ENCODE measurements at regions of chr2 and their contacts with region 1.

Region 1: DNA sequence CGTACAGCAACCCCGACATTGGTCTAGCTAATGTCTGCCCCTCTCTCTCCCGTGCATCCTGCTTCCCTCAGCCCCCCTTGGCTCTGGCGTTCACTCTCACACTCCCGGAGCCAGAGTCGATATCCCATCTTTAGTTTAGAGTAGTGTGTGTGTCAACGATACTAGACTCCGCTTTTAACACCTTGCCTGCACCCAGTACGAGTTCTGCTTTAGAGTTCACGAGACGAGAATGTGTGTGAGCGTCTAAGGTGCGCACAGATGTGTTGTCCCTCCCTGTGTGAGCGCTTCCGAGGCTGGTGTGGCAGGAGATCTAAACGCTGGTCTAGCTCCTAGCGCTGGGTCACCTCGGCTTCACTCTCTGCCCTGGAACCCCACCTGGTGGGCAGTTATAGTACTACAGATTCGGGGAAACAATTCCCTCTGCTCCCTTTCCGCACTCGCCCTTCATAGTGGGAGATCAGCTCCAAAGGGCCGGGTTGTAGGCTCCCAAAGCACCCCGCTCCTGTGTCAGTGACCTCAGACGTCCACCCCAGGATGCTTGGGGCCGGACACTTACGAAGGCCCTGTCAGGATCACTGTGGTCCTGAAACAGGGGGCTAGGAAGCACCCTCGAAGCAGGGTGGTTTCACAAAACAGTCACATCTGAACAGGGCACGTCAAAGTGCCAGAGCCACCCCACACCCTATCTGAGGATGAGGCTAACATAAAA is 2.6 kb upstream of the CYP26B1 start:
- DNase-seq: peak; percentile 83 to 92
- ATAC-seq: peak; percentile 66 to 83
- H3K4me3 ChIP-seq: peak overlapping the region; percentile 61
- H3K27ac ChIP-seq: peak overlapping the region; percentile 29 to 59; a peak in 4 of 6 replicates
- H3K4me1 ChIP-seq: peaks cover 36% of the 10 kb centered on the region
- CTCF ChIP-seq: peak; percentile 89
- EP300 ChIP-seq: no peak
- POLR2A ChIP-seq: no peak
- RAD21 ChIP-seq: peak; percentile 95 to 97

Region 2: DNA sequence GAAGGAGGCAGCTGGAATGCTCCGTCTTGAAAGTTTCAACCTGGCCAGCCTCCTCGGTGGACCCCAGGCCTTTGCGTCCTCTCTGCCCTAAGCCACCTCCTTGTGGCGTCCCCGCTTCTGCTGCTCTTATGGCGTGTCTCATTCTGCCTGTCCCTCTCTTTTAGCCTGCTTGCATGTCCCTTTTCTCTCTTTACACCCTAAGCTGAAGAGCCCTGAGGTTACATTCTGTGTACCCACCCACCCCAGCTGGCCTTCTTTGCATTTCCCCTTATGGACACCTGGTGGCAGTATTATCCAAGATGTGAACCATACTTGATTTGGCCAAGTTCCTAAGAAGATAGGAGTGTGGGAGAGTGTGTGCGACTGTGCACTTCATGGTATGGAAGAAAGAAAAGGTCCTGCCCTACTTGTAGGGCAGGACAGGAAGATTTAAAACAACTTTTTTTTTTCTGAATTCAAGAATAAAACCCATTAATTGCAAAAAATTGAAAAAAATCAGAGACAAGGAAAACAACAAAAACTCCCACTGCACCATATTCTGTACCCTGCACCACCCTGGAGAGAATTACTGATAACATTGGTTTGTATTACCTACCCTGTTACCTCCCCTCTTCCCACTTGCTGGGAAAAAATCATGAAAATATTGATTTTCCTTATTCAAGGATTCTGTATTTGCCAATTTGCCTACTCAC is 619.5 kb before region 1 on chr2:
- CTCF ChIA-PET with region 1: interaction called, 10 read pairs
- POLR2A ChIA-PET with region 1: no interaction called
- DNase-seq: peak; percentile 65 to 83
- ATAC-seq: peak; percentile 48 to 87; a peak in 5 of 6 replicates
- H3K4me3 ChIP-seq: no peak overlapping the region
- H3K27ac ChIP-seq: no peak overlapping the region
- H3K4me1 ChIP-seq: no peaks in the 10 kb centered on the region
- CTCF ChIP-seq: peak; percentile 66
- EP300 ChIP-seq: no peak
- POLR2A ChIP-seq: no peak
- RAD21 ChIP-seq: peak; percentile 67 to 84

Region 3: DNA sequence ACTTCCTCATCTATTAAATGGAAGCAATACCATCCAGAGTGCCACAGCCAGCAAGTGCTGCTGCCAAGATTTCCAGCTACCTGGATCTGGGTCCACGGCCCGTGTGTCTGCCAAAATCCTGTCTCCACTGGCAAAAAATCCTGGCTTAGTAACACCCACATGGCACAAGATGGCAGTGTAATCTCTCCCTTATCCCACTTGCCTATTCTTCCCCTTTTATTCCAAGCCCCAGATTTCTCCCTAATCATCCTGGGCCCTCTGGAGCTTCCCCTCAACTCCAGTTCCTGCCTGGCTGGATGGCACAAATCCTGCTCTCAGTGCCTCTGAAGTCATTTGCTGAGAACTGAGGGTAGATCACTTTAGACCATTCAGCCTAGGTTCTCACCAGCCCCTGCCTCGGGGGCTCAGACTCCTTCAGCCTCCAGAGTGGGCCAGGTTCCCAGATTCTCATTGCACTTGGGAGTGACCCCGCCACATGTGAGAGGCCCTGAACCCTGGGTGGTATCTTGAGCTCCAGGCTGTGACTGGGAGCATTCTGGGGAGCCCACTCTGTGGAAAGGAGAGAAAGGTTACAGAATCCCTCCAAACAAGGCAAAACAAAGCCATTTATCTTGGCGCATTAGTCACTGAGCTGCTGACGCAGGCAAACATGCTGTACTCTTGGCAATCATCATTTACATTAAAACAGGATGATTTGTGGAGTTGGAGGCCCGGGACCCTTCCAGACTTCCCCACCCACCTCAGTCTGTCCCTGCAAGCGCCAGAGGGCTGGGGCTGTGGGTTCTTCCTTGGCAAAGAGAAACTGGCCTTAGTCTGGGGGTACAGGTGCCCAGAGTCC is 371.2 kb before region 1 on chr2:
- CTCF ChIA-PET with region 1: interaction called, 30 read pairs
- POLR2A ChIA-PET with region 1: no interaction called
- DNase-seq: peak in 1 of 2 experiments; percentile 42
- ATAC-seq: peak; percentile 50 to 68; a peak in 4 of 6 replicates
- H3K4me3 ChIP-seq: no peak overlapping the region
- H3K27ac ChIP-seq: peak overlapping the region; percentile 52 to 66; a peak in 4 of 6 replicates
- H3K4me1 ChIP-seq: peaks cover 28% of the 10 kb centered on the region
- CTCF ChIP-seq: peak; percentile 50
- EP300 ChIP-seq: no peak
- POLR2A ChIP-seq: no peak
- RAD21 ChIP-seq: peak; percentile 69 to 76

Region 4: GRCh38 chr2:71884303-71885042 is 265.8 kb before region 1 on chr2:
- CTCF ChIA-PET with region 1: interaction called, 10 read pairs
- POLR2A ChIA-PET with region 1: no interaction called
- DNase-seq: peak in 1 of 2 experiments; percentile 45
- ATAC-seq: no peak
- H3K4me3 ChIP-seq: no peak overlapping the region
- H3K27ac ChIP-seq: peak overlapping the region; percentile 67 to 78; a peak in 5 of 6 replicates
- H3K4me1 ChIP-seq: peaks cover 43% of the 10 kb centered on the region
- CTCF ChIP-seq: no peak
- EP300 ChIP-seq: no peak
- POLR2A ChIP-seq: no peak
- RAD21 ChIP-seq: no peak

Region 5: GRCh38 chr2:71950256-71951082 is 199.8 kb before region 1 on chr2:
- CTCF ChIA-PET with region 1: interaction called, 11 read pairs
- POLR2A ChIA-PET with region 1: no interaction called
- DNase-seq: no peak
- ATAC-seq: peak in 1 of 2 experiments; percentile 49; a peak in 3 of 6 replicates
- H3K4me3 ChIP-seq: no peak overlapping the region
- H3K27ac ChIP-seq: peak overlapping the region in 1 of 2 experiments; percentile 33; a peak in 1 of 6 replicates
- H3K4me1 ChIP-seq: 0 out of 3 replicates have a peak, but pooled peaks cover 8% of the 10 kb centered on the region
- CTCF ChIP-seq: no peak
- EP300 ChIP-seq: no peak
- POLR2A ChIP-seq: no peak
- RAD21 ChIP-seq: no peak

Region 6: GRCh38 chr2:72137498-72138010 is 12.8 kb before region 1 on chr2:
- CTCF ChIA-PET with region 1: interaction called, 37 read pairs
- POLR2A ChIA-PET with region 1: no interaction called
- DNase-seq: peak; percentile 64 to 88
- ATAC-seq: peak; percentile 70 to 91
- H3K4me3 ChIP-seq: no peak overlapping the region
- H3K27ac ChIP-seq: peak overlapping the region in 1 of 2 experiments; percentile 63; a peak in 3 of 6 replicates
- H3K4me1 ChIP-seq: peaks cover 27% of the 10 kb centered on the region
- CTCF ChIP-seq: peak; percentile 98
- EP300 ChIP-seq: no peak
- POLR2A ChIP-seq: no peak
- RAD21 ChIP-seq: peak; percentile 77 to 81